Left lung (tissue), 14 donors: ENCODE measurements at regions of chr18 and their contacts with region 1.

Region 1: GRCh38 chr18:51039138-51040112 is 9.4 kb downstream of the SMAD4 start:
- DNase-seq: no peak
- ATAC-seq: no peak
- H3K4me3 ChIP-seq: no peak overlapping the region
- H3K27ac ChIP-seq: no peak overlapping the region
- H3K4me1 ChIP-seq: peaks cover 6 to 95% of the 10 kb centered on the region in 2 donors
- H3K27me3 ChIP-seq: no peaks in the 10 kb centered on the region
- CTCF ChIP-seq: no peak

Region 2: DNA sequence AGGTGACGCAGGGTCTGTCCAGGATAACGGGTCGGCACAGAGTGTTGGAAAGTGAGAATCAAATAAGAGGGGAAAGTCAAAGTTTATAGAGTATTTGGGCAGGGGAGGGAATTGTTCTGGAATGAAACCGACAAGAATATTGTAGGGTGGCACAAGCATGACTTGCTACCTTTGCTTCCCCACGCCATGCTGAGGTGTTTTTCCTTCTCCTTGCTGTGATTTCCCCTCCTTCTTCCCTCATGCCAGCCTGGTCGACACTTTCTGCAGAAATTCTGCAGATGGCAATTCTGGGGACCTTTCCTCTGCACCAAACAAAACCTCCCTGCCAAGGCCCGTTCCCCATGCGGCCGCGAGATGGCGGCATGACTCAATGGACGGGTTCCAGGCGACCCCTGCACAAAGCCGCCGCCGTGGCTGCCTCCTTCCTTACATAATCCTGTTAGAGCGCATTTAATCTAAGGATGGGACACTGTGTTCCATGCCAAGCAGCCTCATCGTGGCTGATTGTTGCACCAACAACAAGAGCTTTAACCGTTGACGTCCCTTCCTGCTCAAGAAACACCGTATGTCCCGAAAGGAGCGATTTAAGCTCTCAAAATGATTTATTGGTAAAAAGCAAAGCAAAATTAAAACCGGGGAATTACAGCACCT is 219.6 kb before region 1 on chr18 and contains the start of gene MRO:
- intact Hi-C with region 1: loop called in 1 of 2 experiments (anchors 10 kb)
- DNase-seq: peak; percentile 80 to 97 (median 86)
- ATAC-seq: peak; percentile 99
- H3K4me3 ChIP-seq: peak within 1 kb of the TSS; percentile 12 to 21
- H3K27ac ChIP-seq: peak within 1 kb of the TSS in 1 of 2 donors; percentile 80
- H3K4me1 ChIP-seq: peaks cover 8 to 24% of the 10 kb centered on the region in 2 donors
- H3K27me3 ChIP-seq: peaks cover 5 to 15% of the 10 kb centered on the region in 2 donors
- CTCF ChIP-seq: peak; percentile 88 to 92
- polyA plus RNA-seq, gene MRO: 0.26 to 0.48 (median 0.35) TPM